Adrenal gland (tissue), 19 donors: ENCODE measurements at regions of chr16 and their contacts with region 1.

Region 1: GRCh38 chr16:66275775-66276428 is 90.6 kb upstream of the CDH5 start:
- DNase-seq: peak in 5 of 7 donors; percentile 21 to 72 (median 58)
- H3K4me3 ChIP-seq: no peak overlapping the region
- H3K27ac ChIP-seq: no peak overlapping the region
- H3K4me1 ChIP-seq: no peaks in the 10 kb centered on the region
- H3K27me3 ChIP-seq: no peaks in the 10 kb centered on the region
- CTCF ChIP-seq: peak; percentile 35 to 63 (median 56)
- POLR2A ChIP-seq: no peak

Region 2: DNA sequence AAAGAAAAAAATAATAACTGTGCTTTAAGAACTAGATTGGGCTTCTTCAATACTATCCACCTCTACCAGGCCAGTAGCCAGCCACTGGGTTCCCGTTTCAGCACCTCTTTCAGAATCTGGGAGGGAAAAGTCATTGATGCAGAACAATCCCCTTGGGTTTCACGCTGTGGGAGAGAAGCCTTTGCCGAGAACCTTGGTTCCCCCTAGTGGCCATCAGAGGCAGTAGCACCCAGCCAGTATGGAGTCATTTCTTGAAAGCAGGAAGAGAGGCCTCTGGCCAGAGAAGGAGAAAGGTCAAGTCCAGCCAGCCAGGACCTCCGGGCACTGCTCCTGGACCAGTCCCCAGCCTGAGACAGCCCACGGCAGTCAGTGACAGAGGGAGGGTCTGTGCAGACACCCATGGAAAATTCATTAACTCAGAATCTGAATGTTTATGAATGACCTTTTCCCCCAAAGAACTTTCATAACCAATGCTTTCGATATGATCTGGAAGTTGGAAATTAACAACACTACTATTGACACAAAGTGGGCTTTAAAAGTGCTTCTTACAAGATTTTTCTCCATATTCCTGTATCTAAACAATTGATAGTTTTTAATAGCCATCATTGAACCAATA is 39.4 kb after region 1 on chr16:
- intact Hi-C with region 1: loop called in 1 of 2 experiments (anchors 5 kb)
- DNase-seq: peak; percentile 58 to 79 (median 66)
- H3K4me3 ChIP-seq: no peak overlapping the region
- H3K27ac ChIP-seq: peak overlapping the region in 1 of 5 donors; percentile 26
- H3K4me1 ChIP-seq: no peaks in the 10 kb centered on the region
- H3K27me3 ChIP-seq: no peaks in the 10 kb centered on the region
- CTCF ChIP-seq: peak; percentile 79 to 98 (median 86)
- POLR2A ChIP-seq: no peak

Region 3: DNA sequence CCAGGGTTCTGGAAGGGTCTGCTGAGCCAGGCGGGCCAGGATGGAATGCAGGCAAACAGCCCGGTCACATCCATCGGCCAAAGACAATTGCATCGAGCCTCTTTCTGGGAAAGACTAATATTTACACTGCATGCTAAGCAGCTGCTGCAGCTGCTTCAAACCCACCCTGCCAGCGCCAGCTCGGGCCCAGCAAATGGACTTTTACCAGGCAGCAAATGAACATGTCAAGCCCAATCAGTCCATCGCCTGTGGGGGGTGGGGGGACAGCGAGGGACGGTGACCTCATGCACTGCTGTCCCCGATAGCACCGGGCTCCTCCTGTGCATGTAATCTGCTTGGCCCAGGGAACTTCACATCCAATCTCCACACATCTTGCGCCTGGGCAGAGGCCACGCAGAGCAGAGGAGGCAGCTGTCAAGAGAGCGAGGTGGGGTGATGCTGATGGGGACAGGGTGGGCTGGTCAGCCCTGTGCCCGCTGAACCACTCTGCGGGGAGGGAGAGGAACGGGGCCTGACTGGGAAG is 51.1 kb after region 1 on chr16:
- intact Hi-C with region 1: no loop called
- DNase-seq: no peak
- H3K4me3 ChIP-seq: no peak overlapping the region
- H3K27ac ChIP-seq: no peak overlapping the region
- H3K4me1 ChIP-seq: no peaks in the 10 kb centered on the region
- H3K27me3 ChIP-seq: no peaks in the 10 kb centered on the region
- CTCF ChIP-seq: no peak
- POLR2A ChIP-seq: no peak